Heart left ventricle (tissue), 16 donors: ENCODE measurements at regions of chr22 and their contacts with region 1.

Region 1: DNA sequence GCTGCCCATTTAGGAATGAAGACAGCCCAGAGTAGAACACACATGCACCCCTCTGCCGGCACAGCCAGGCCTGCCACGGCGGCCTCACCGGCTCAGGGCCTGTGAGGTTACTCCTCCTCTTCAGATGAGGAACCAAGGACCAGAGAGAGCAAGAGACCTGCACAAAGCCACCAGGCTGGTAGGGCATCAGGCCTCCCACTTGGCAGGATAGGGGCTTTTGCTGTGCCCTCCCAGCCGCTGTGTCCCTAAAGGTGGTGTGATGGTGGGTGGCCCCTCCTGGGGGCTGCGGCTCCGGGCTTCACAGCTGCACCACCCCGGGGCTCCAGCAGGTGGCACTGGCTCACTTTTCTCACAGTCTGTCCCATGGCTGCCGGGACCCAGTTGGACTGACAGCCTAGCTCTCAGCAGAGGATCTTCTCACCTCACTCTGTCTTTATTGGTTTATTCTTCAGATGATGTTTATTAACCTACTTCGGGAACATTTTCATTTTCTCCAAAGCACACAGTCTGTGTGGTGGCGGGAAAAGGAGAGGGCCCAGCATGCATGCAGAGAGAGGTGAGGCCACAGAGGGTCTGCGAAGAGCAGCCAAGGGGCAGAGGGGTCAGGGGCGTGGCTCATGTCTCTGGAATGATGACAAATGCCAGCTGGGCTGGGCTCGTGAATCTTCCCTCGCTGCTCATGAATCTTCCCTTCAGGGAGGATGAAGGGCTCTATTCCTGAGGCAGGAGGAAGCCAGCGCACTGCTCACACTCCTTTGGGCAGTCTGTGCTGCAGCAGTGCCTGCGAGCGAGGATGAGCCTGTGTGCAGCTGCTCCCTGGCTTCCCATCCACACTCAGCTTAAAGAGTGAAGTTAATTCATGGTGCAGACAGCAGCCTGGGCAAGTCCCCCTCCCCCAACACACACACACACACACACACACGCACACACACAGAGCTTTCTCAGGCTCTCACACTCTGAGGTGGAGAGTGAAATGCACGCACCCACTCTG is 101.1 kb upstream of the PITPNB start:
- DNase-seq: peak; percentile 66 to 86 (median 73)
- ATAC-seq: peak; percentile 56 to 73 (median 70)
- H3K4me3 ChIP-seq: no peak overlapping the region
- H3K27ac ChIP-seq: peak overlapping the region in 2 of 12 donors; percentile 26 to 48
- H3K4me1 ChIP-seq: peaks cover 0 to 49% (median 19%) of the 10 kb centered on the region in 12 donors
- H3K27me3 ChIP-seq: no peaks in the 10 kb centered on the region
- CTCF ChIP-seq: peak; percentile 91 to 99 (median 96)
- POLR2A ChIP-seq: no peak

Region 2: GRCh38 chr22:27962268-27963044 is 57.7 kb before region 1 on chr22:
- intact Hi-C with region 1: no loop called
- DNase-seq: peak in 1 of 5 donors; percentile 48
- ATAC-seq: peak in 3 of 4 donors; percentile 62 to 80 (median 74)
- H3K4me3 ChIP-seq: no peak overlapping the region
- H3K27ac ChIP-seq: peak overlapping the region in 2 of 12 donors; percentile 27 to 37
- H3K4me1 ChIP-seq: peaks cover 0 to 27% (median 16%) of the 10 kb centered on the region in 12 donors
- H3K27me3 ChIP-seq: no peaks in the 10 kb centered on the region
- CTCF ChIP-seq: no peak
- POLR2A ChIP-seq: no peak

Region 3: DNA sequence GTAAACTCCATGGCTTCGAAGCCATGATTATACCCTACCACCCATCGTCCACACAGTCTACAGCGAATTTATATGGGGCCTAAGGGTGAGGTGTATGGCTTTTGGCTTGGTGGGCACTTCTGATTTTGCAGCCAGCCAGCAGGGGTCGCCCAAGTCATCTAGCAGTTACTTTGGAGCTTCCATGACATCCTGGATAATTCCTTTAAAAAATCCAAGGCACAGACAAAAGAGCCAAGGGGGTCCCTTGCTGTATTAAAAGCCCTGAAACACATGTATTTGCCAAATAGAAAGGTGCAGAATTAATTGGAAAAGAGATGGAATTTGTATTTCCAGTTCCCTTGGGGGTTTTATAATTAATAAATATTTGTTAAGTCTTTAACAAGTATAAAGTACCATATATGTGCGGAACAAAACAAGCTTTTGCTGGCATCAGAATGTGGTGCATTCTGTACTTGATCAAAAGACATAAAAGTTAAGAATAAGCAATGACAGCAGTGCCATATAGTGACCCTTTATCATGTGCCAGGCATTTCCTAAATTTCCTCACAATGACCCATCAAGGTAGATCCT is 31.7 kb after region 1 on chr22:
- intact Hi-C with region 1: loop called in 1 of 10 experiments (anchors 2 kb)
- DNase-seq: peak; percentile 56 to 79 (median 69)
- ATAC-seq: peak in 3 of 4 donors; percentile 62 to 77 (median 66)
- H3K4me3 ChIP-seq: no peak overlapping the region
- H3K27ac ChIP-seq: no peak overlapping the region
- H3K4me1 ChIP-seq: peaks cover 0 to 22% (median 5%) of the 10 kb centered on the region in 12 donors
- H3K27me3 ChIP-seq: no peaks in the 10 kb centered on the region
- CTCF ChIP-seq: peak; percentile 70 to 95 (median 89)
- POLR2A ChIP-seq: no peak

Region 4: DNA sequence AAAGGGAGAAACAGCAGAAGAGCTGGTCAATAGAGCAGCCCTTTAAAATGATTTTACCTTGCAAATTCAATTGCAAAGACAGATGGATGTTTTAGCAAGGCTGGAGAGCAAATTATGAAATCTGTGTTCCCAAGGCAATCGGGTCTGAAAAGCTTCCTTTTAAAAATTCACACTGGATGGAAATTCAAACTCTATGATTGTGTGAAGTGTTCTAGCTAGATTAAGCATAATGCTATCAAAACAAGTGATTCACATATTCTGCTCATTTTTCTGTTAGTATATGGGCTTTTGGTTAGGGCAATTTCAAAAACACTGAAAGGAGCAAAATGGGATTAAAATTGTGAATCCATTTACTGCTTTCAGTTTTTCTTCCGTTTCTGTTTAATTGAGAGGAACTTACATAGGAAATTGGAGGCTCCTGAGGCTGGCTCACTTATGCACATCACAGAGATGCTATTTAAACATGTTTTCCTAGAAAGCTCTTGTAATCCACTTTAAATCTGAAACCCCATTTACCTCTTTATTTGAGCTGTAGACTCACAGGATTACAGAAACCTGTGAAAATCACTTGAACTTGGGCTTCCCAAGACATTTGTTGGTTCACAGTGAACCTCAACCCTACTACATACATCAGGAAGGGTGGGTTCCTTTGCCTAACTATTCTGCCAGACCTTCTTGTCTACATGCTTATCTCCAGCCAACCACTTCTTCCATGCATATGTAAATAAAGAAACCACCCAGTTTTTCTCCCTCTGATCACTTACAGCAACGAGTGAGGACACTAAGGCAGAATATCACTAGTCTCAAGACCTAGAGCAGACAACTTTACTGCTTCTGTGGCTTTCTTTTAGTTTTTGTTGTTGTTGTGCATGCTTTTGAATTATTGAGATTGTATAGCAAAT is 100.8 kb after region 1 on chr22:
- intact Hi-C with region 1: loop called in 1 of 10 experiments (anchors 5 kb)
- DNase-seq: no peak
- ATAC-seq: no peak
- H3K4me3 ChIP-seq: no peak overlapping the region
- H3K27ac ChIP-seq: no peak overlapping the region
- H3K4me1 ChIP-seq: peaks cover 0 to 38% (median 19%) of the 10 kb centered on the region in 12 donors
- H3K27me3 ChIP-seq: no peaks in the 10 kb centered on the region
- CTCF ChIP-seq: no peak
- POLR2A ChIP-seq: no peak